SK-N-SH (cell line): ENCODE measurements at regions of chr9 and their contacts with region 1.

Region 1: DNA sequence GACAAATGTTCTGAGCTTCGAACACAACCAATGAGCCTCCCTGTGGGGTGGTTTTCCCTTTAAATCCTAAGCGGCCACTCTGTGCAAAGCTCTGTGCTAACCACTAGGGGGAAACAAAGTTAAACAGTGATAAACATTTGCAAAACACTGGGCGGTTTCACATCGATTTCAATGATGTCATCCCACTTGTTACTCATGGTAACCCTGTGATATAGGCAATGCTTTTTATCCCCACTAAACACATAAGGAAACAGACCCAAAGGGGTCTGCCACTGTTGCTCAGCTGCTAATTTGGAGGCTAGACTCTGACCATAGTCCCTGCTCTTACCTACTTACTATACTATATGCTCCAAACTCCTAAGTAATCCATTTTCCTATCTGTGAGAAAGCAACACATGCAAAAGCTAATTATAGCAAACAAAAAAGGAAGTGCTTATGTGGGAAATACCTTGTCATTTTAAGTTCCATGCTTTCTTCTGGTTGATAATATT is 57.3 kb downstream of the PTPN3 start:
- DNase-seq: peak; percentile 74
- H3K4me3 ChIP-seq: no peak overlapping the region; a peak in 1 of 4 replicates
- H3K27ac ChIP-seq: peak overlapping the region in 1 of 2 experiments; percentile 67; a peak in 2 of 4 replicates
- H3K4me1 ChIP-seq: peaks cover 0 to 2% of the 10 kb centered on the region in 2 experiments; a peak in 1 of 4 replicates
- H3K27me3 ChIP-seq: no peaks in the 10 kb centered on the region
- CTCF ChIP-seq: peak; percentile 90
- EP300 ChIP-seq: no peak
- RAD21 ChIP-seq: peak; percentile 85

Region 2: GRCh38 chr9:108859459-108860114 is 581.3 kb before region 1 on chr9:
- CTCF ChIA-PET with region 1: no interaction called
- POLR2A ChIA-PET with region 1: no interaction called
- DNase-seq: no peak
- H3K4me3 ChIP-seq: no peak overlapping the region
- H3K27ac ChIP-seq: no peak overlapping the region
- H3K4me1 ChIP-seq: no peaks in the 10 kb centered on the region
- H3K27me3 ChIP-seq: no peaks in the 10 kb centered on the region
- CTCF ChIP-seq: no peak
- EP300 ChIP-seq: no peak
- RAD21 ChIP-seq: no peak

Region 3: DNA sequence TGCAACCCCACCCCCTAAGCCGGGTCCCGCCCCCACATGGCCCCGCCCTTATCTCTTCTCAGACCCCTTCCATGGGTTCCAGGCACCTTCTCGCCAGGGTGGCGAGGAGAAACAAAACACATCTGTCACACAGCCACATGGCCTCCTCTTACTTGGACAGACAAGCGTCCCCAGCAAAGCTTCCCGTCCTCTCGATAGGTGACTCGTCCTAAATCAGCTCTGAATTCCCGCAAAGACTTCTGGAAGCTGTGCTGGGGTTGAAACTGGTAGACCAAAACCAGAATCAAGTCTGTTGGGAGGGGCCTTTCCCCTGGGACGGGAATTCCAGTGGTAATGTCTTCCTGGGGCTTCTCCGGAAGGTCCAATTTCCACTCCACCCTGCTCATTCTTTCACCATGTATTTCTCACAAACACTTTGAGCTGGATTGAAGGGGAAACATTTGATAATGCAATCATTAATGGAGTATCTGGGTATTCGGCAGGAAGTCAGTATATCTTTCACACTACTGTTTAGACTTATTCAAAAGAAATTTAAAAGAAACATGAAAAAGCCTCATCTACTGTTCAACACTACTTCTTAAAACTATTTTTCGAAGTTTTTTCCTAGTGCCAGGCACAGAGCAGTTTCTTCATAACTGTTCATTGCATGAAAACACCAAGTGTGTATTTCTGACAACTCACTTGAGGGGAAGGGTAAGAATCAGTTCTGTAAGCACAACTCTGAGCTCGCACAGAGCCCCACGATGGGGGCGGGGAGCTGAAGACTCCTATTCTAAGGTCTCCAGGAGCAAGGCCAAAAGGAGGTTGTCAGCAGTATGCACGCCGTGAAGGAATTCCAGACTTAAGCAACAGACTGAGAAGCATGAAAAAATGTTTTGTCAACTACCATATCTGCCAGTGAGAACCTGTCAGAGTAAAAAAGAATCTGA is 426.9 kb before region 1 on chr9:
- CTCF ChIA-PET with region 1: no interaction called
- POLR2A ChIA-PET with region 1: no interaction called
- DNase-seq: no peak
- H3K4me3 ChIP-seq: peak overlapping the region; percentile 41 to 46
- H3K27ac ChIP-seq: peak overlapping the region; percentile 75 to 76
- H3K4me1 ChIP-seq: peaks cover 13 to 22% of the 10 kb centered on the region in 2 experiments
- H3K27me3 ChIP-seq: no peaks in the 10 kb centered on the region
- CTCF ChIP-seq: no peak
- EP300 ChIP-seq: no peak
- RAD21 ChIP-seq: no peak

Region 4: GRCh38 chr9:109244157-109245132 is 196.4 kb before region 1 on chr9:
- CTCF ChIA-PET with region 1: no interaction called
- POLR2A ChIA-PET with region 1: no interaction called
- DNase-seq: peak; percentile 71
- H3K4me3 ChIP-seq: peak overlapping the region in 1 of 2 experiments; percentile 49; a peak in 1 of 4 replicates
- H3K27ac ChIP-seq: no peak overlapping the region
- H3K4me1 ChIP-seq: peaks cover 0 to 9% of the 10 kb centered on the region in 2 experiments; a peak in 1 of 4 replicates
- H3K27me3 ChIP-seq: no peaks in the 10 kb centered on the region
- CTCF ChIP-seq: peak; percentile 93
- EP300 ChIP-seq: no peak
- RAD21 ChIP-seq: peak; percentile 70

Region 5: GRCh38 chr9:109453210-109453842 is 12.5 kb after region 1 on chr9:
- CTCF ChIA-PET with region 1: interaction called, 62 read pairs
- POLR2A ChIA-PET with region 1: no interaction called
- DNase-seq: peak; percentile 64
- H3K4me3 ChIP-seq: no peak overlapping the region
- H3K27ac ChIP-seq: peak overlapping the region in 1 of 2 experiments; percentile 52; a peak in 2 of 4 replicates
- H3K4me1 ChIP-seq: peaks cover 3 to 37% of the 10 kb centered on the region in 2 experiments; a peak in 2 of 4 replicates
- H3K27me3 ChIP-seq: no peaks in the 10 kb centered on the region
- CTCF ChIP-seq: no peak
- EP300 ChIP-seq: peak; percentile 26 to 77; a peak in 3 of 4 replicates
- RAD21 ChIP-seq: no peak

Region 6: GRCh38 chr9:109475526-109475925 is 34.7 kb after region 1 on chr9:
- CTCF ChIA-PET with region 1: interaction called, 177 read pairs
- POLR2A ChIA-PET with region 1: interaction called, 8 read pairs
- DNase-seq: no peak
- H3K4me3 ChIP-seq: no peak overlapping the region
- H3K27ac ChIP-seq: no peak overlapping the region
- H3K4me1 ChIP-seq: peaks cover 8 to 13% of the 10 kb centered on the region in 2 experiments; a peak in 1 of 4 replicates
- H3K27me3 ChIP-seq: no peaks in the 10 kb centered on the region
- CTCF ChIP-seq: no peak
- EP300 ChIP-seq: no peak
- RAD21 ChIP-seq: no peak

Region 7: GRCh38 chr9:109499631-109500410 is 59.0 kb after region 1 on chr9:
- CTCF ChIA-PET with region 1: interaction called, 23 read pairs
- POLR2A ChIA-PET with region 1: no interaction called
- DNase-seq: peak; percentile 81
- H3K4me3 ChIP-seq: peak overlapping the region; percentile 54 to 64
- H3K27ac ChIP-seq: no peak overlapping the region
- H3K4me1 ChIP-seq: peaks cover 0 to 13% of the 10 kb centered on the region in 2 experiments; a peak in 2 of 4 replicates
- H3K27me3 ChIP-seq: no peaks in the 10 kb centered on the region; the same call in 1 of the 2 replicates
- CTCF ChIP-seq: no peak
- EP300 ChIP-seq: no peak
- RAD21 ChIP-seq: no peak

Region 8: DNA sequence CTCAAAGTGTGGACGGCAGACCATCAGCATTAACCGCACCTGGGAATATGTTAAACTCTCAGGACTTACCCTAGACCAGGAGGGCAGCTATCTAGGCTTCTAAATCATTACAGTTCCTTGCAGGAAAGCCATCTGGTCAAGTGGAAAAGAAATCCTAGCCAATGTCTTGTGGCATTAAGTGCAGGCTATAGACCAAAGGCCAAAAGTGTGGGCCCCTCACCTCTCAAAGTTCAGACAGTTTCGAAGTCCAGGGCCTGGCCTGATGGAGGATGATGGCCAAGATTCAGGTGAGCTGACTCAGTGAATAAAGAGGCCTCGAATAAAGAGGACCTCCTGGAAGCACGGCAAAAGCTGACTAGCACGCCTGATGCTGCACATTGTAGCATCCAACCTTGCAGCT is 81.3 kb after region 1 on chr9:
- CTCF ChIA-PET with region 1: interaction called, 25 read pairs
- POLR2A ChIA-PET with region 1: no interaction called
- DNase-seq: no peak
- H3K4me3 ChIP-seq: no peak overlapping the region; a peak in 1 of 4 replicates
- H3K27ac ChIP-seq: no peak overlapping the region
- H3K4me1 ChIP-seq: no peaks in the 10 kb centered on the region
- H3K27me3 ChIP-seq: no peaks in the 10 kb centered on the region
- CTCF ChIP-seq: no peak
- EP300 ChIP-seq: no peak
- RAD21 ChIP-seq: no peak

Region 9: GRCh38 chr9:109590945-109591344 is 150.1 kb after region 1 on chr9:
- CTCF ChIA-PET with region 1: no interaction called
- POLR2A ChIA-PET with region 1: no interaction called
- DNase-seq: no peak
- H3K4me3 ChIP-seq: no peak overlapping the region
- H3K27ac ChIP-seq: peak overlapping the region in 1 of 2 experiments; percentile 60; a peak in 2 of 4 replicates
- H3K4me1 ChIP-seq: no peaks in the 10 kb centered on the region
- H3K27me3 ChIP-seq: no peaks in the 10 kb centered on the region; the same call in 1 of the 2 replicates
- CTCF ChIP-seq: no peak
- EP300 ChIP-seq: no peak
- RAD21 ChIP-seq: no peak